Activated T-helper 1 cell treated with anti-CD3 and anti-CD28 coated beads, Interleukin-12 subunit alpha, Interleukin-12 subunit beta, Interleukin-2, Interleukin-4 antibody, amounts not matched to agents 30 ng/mL and 10 ng/mL and 1 ng/mL, durations not matched to agents 14 hours and 24 hours and 36 hours (primary cell): ENCODE measurements at regions of chr7 and their contacts with region 1.

Region 1: DNA sequence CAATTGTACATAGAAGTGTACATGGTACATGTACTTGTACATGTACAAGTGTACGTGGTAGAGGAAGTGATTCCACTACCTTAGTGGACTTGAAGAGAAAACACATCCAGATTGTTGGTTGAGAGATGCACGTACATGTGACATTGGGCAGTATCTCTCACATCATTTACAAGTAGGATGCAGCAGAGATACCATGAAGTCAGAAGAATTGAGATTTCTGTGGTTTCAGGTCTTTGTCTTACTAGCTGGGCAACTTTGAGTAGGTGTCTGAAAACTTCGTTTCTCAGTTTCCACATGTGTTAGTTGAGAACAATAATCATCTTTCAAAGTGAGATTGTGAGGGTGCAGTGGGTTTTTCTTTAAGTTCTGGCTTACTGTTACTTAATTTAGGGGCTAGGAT is 21.5 kb downstream of the CLDN12 start:
- DNase-seq: no peak
- H3K4me3 Mint-ChIP-seq: peak overlapping the region; percentile 32
- H3K27ac Mint-ChIP-seq: peak overlapping the region; percentile 65
- H3K4me1 Mint-ChIP-seq: peaks cover 21% of the 10 kb centered on the region
- H3K27me3 Mint-ChIP-seq: no peaks in the 10 kb centered on the region

Region 2: DNA sequence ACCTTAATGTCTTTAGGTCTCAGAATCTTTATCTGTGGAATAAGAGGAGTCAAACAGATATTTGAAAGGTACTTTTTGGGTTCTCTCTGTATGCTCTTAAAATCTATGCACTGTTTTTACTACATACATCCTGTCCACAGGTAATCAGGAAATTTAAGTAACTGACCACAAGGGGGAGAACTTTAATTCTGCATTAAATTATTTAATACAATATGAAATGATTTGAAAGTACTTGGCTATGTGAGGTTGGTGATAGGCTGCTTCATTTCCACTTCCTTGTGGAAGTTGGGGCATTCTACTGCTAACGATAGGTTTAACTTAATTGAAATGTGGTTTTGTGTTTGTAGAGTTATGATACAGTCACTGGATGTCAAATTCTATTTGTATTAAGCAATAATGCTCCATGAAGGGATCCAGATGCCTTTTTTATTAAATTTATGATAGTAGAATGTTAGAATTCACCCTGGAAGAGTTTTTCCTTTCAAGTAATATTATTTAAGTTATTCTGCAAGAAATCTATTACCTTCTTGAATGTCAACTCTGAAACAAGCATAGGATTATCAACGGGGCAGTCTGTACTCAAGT is 1635.1 kb before region 1 on chr7:
- intact Hi-C with region 1: loop called (anchors 10 kb)
- DNase-seq: no peak
- H3K4me3 Mint-ChIP-seq: no peak overlapping the region
- H3K27ac Mint-ChIP-seq: no peak overlapping the region
- H3K4me1 Mint-ChIP-seq: no peaks in the 10 kb centered on the region
- H3K27me3 Mint-ChIP-seq: peaks cover 2% of the 10 kb centered on the region

Region 3: GRCh38 chr7:90155206-90155605 is 269.5 kb before region 1 on chr7:
- intact Hi-C with region 1: loop called (anchors 1 kb)
- DNase-seq: no peak
- H3K4me3 Mint-ChIP-seq: peak overlapping the region; percentile 78
- H3K27ac Mint-ChIP-seq: peak overlapping the region; percentile 12
- H3K4me1 Mint-ChIP-seq: peaks cover 5% of the 10 kb centered on the region
- H3K27me3 Mint-ChIP-seq: peaks cover 10% of the 10 kb centered on the region

Region 4: DNA sequence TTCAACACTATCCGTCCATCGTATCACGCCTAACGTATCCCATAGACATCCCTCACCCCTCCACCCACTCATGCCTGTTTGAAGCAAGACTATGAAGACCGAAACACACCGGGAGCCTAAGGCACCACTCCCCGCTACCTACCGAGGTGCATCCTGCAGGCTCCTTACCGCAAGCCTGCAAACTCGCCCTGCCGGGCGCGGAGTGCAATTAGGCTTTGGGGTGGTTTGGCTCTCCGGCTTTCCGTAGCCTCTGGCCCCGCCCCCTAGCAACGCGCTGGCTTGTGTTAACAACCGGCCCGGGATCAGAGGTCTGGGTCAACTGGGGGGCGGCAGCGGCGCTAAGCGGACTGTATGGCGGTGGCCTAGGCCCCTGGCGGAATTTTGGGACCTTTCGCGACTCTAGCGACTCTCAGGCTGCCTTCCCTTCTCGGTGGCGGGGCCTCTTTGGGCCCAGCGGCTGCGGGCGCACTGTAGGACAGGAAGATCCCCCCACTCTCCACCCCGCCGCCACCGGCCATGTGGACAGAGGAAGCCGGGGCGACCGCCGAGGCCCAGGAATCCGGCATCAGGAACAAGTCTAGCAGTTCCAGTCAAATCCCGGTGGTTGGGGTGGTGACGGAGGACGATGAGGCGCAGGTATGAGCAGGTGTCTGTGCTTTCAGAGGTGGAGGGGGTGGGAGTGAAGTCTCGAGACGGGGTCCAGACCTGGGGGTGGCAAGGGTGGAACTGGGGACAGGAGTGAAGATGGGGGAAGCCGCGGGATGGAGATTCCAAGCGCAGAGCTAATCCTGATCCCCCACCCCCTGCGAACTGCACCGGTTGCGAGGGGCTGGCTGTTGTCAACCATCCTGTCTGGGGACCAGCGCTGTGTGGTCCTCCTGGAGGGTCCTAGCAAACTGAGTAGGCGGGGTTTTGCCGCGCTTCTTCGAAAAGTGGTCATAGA is 179.5 kb before region 1 on chr7 and contains the start of gene CFAP69:
- intact Hi-C with region 1: loop called (anchors 2 kb)
- DNase-seq: peak; percentile 79
- H3K4me3 Mint-ChIP-seq: peak within 1 kb of the TSS; percentile 88
- H3K27ac Mint-ChIP-seq: peak within 1 kb of the TSS; percentile 60
- H3K4me1 Mint-ChIP-seq: peaks cover 21% of the 10 kb centered on the region
- H3K27me3 Mint-ChIP-seq: peaks cover 28% of the 10 kb centered on the region
- total RNA-seq, gene CFAP69: not detected in 2 replicates

Region 5: DNA sequence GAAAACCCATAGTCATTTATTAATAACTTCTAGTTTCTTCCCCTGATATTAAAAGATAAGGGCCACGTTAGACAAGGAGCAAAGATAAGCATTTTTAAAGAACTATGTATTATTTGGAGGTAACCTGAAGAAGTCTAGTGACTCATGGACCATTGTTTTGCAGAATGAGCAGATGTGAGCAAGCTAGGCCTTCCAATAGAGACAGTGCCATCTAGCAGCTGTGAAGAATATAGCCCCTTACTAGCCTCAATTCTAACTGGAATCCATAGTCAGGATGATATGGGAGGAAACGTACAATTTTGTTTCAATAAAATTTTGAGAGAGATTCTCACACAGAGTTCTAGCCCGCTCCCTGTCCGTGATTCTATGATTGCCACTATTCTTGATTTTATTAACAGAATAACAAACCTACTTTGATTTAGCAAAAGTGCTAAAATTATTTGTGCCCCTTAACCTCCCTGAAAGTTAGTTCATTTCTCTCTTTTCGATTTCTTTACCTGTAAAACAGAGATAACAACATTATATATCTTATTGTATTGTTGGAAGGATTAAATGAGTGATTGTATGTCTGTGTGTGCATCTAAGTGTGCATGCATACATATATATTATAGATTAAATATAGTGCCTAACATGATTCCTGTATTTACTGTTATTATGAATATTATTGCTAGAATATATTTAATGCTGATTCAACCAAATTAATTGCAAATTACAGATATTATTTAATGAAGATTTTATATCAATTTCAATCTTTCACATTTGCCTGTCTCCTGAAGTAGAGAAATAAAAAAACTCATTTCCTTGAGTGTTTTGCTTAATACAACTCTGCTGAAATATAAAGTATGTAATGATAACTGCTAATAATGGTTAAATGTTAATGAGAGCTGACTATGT is 126.3 kb before region 1 on chr7:
- intact Hi-C with region 1: loop called (anchors 2 kb)
- DNase-seq: no peak
- H3K4me3 Mint-ChIP-seq: no peak overlapping the region
- H3K27ac Mint-ChIP-seq: no peak overlapping the region
- H3K4me1 Mint-ChIP-seq: no peaks in the 10 kb centered on the region
- H3K27me3 Mint-ChIP-seq: peaks cover 2% of the 10 kb centered on the region

Region 6: DNA sequence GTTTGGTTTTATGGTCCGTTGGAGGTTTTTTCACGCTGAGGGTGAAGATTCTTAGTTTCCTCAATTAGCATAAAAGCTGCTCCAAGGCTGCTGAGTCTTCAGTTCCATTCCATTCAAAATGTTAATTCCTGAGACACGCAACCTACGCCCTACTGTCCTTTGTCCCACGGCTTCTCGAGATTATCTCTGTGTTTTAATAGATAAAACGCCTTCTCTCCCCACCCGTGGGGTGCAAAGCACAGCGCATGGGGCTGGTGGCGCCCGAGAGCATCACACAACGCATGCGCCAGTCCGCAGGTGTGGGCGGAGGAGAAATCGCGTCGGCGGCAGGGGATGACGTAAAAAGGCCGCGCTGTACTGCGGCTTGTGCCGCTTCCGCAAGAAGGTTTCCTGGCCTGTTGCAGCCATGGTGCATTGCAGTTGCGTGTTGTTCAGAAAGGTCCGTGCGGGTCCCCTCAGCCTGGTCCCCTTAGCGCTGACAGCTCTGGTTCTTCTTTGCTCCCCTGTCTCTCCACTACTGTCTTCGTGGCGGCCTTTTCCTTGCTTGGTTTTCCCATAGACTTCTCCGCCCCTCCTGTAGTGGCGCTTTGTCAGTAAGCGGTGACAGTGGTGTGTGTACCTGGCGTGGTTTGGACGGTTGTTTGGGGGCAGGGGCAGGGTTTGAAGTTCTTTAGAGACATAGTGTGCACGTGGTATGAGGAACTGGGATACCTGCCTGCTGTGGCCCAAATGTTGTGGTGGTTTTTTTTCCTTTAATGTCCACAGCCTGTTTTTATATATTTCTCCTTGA is 78.2 kb before region 1 on chr7 and contains the start of gene GTPBP10:
- intact Hi-C with region 1: loop called (anchors 1 kb)
- DNase-seq: peak; percentile 94
- H3K4me3 Mint-ChIP-seq: peak within 1 kb of the TSS; percentile 91
- H3K27ac Mint-ChIP-seq: peak within 1 kb of the TSS; percentile 97
- H3K4me1 Mint-ChIP-seq: peaks cover 38% of the 10 kb centered on the region
- H3K27me3 Mint-ChIP-seq: no peaks in the 10 kb centered on the region
- total RNA-seq, gene GTPBP10: 32.6 and 36.2 TPM in 2 replicates